ENCODE measurements at regions of chr2 and their contacts with region 1.

Region 1: DNA sequence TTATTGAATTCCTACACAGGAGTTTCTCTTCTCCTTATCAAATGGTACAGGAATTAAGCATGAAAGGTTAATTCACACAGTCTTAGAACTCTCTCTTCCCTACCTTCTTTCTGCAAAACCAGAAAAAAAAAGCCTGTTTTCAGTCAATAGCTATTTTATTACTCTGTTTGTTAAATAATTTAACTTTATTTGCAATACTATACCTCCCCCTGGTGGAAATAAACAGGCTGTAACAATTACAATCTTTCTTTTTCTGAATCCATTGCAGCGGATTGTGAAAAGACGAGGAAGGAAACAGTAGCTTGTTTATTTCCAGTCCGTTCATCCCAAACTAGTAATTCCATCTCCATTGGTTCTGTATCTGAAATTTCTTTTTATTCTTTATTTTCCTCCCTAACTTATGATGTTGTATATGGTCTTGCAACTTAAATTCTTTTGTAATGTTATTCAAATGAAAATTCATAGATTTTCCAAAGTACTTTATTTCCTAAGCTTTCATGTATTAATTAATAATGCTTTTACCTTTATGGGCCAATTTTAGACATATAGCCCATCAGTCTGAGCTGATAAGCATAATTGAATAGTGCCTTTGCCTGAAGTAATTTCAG is 165.2 kb downstream of the SH3BP4 start:
- DNase-seq: no peak
- ATAC-seq: peak; percentile 41
- H3K4me3 ChIP-seq: no peak overlapping the region
- H3K27ac ChIP-seq: no peak overlapping the region
- H3K4me1 ChIP-seq: no peaks in the 10 kb centered on the region
- H3K27me3 ChIP-seq: no peaks in the 10 kb centered on the region

Region 2: DNA sequence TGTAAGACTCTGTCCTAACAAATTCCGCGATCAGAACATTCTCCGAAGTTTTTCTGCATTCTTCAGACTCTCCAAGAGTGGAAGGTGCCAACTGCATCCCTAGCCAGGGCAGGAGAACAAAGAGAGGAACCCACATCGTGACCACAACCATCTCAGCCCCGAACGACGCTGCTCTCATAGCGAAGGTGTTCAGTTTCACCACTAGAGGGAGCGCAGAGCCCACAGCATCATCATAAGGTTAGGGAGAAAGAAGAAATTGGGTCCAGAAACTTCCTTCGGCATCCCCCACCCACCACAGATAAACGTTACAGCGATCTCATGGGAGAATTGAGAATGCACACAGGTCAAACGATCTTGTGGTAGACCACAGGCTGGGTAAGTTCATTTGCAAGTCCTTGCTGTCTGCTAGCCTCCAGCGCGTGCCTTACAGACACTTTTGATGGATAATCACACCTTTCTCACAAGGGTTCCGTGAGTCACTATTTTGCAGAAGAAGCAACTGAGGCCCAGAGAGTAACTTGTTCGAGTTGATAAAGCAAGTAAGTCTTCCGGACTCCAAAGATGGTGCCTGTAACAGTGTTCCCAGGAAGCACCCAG is 566.4 kb before region 1 on chr2:
- intact Hi-C with region 1: loop called (anchors 2 to 5 kb)
- DNase-seq: peak; percentile 74 to 81
- ATAC-seq: peak; percentile 85
- H3K4me3 ChIP-seq: no peak overlapping the region
- H3K27ac ChIP-seq: no peak overlapping the region
- H3K4me1 ChIP-seq: no peaks in the 10 kb centered on the region
- H3K27me3 ChIP-seq: no peaks in the 10 kb centered on the region

Region 3: DNA sequence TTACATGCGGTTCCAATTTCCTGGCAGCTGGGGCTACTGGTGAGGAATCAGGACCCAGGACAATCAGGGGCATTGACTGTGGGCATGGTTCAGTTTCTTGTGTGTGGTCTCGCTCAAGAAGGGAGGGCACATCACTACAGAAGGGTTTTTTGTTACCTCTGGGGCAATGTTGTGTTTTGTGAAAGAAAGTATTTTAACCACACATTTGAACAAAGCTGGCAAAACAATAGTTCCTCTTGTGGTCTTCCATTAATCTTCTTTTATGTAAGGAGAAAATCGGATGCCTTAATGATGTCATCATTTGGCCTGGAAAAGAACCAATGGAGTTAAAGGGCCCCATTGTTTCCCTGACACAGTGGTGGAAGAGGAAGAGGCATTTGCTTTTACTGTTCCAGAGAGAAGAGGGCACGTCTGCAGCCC is 32.3 kb after region 1 on chr2:
- intact Hi-C with region 1: no loop called
- DNase-seq: no peak
- ATAC-seq: no peak
- H3K4me3 ChIP-seq: no peak overlapping the region
- H3K27ac ChIP-seq: no peak overlapping the region
- H3K4me1 ChIP-seq: no peaks in the 10 kb centered on the region
- H3K27me3 ChIP-seq: no peaks in the 10 kb centered on the region

Measured in aorta (tissue), 5 donors.